ENCODE measurements at regions of chr2 and their contacts with region 1.

Region 1: GRCh38 chr2:190781604-190782198 is 98.9 kb upstream of the GLS start:
- DNase-seq: peak; percentile 48 to 75 (median 59)
- H3K4me3 ChIP-seq: no peak overlapping the region
- H3K27ac ChIP-seq: no peak overlapping the region
- H3K4me1 ChIP-seq: peaks cover 0 to 5% of the 10 kb centered on the region in 2 donors
- H3K27me3 ChIP-seq: no peaks in the 10 kb centered on the region
- CTCF ChIP-seq: peak; percentile 54 to 85 (median 70)
- POLR2A ChIP-seq: no peak

Region 2: DNA sequence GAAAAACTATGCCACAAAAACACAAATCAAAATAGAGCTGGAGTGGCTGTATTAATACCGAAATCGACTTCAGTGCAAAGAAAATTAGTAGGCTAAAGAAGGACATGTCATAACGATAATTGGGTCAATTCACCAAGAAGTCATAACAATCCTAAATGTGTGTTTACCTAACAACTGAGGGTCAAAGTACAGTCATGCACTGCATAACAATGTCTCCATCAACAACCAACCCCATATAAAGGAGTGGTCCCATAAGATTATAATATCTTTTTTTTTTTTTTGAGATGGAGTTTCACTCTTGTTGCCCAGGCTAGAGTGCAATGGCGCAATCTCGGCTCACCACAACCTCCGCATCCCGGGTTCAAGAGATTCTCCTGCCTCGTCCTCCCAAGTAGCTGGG is 45.3 kb before region 1 on chr2:
- intact Hi-C with region 1: no loop called
- DNase-seq: no peak
- H3K4me3 ChIP-seq: no peak overlapping the region
- H3K27ac ChIP-seq: no peak overlapping the region
- H3K4me1 ChIP-seq: no peaks in the 10 kb centered on the region
- H3K27me3 ChIP-seq: no peaks in the 10 kb centered on the region
- CTCF ChIP-seq: no peak
- POLR2A ChIP-seq: no peak

Region 3: GRCh38 chr2:190904640-190905261 is 123.0 kb after region 1 on chr2:
- intact Hi-C with region 1: loop called in 1 of 2 experiments (anchors 10 kb)
- DNase-seq: no peak
- H3K4me3 ChIP-seq: no peak overlapping the region
- H3K27ac ChIP-seq: no peak overlapping the region
- H3K4me1 ChIP-seq: peaks cover 7 to 8% of the 10 kb centered on the region in 2 donors
- H3K27me3 ChIP-seq: no peaks in the 10 kb centered on the region
- CTCF ChIP-seq: no peak
- POLR2A ChIP-seq: no peak

Region 4: DNA sequence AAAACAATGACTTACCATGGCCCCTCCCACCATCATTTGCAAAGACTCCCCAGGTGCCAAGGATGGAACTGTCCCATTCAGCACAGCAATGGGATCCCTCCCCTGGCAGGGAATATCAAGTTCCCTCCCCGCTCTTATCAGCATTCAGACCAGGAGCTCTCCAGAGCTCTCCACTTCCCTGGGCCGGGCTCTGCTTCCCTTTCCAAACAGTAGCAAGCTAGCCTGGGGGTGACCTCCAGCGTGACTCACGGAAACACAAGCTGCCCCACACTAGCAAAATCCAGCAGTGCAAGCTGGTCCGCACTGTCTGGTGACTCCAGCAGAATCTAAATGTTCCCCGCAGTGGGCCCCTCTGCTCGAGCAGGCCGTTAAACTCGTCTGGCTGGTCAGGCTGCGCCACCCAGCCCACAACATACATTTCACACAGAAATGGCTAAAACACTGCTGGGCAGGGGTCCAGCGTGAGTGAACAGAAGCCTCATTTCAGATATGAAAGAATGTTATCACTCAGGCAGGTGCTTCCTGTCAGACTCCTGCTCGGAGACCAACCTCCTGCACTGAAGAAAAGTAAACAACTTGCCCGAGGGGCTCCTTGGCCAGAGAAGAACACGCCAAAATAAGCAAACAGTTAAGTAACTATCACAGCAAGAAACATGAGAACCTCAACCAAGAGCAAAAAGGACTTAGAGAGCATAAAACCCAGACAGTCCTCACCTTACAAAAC is 198.4 kb after region 1 on chr2:
- intact Hi-C with region 1: no loop called
- DNase-seq: peak in 6 of 7 donors; percentile 36 to 70 (median 55)
- H3K4me3 ChIP-seq: no peak overlapping the region
- H3K27ac ChIP-seq: peak overlapping the region in 2 of 5 donors; percentile 26 to 73
- H3K4me1 ChIP-seq: no peaks in the 10 kb centered on the region
- H3K27me3 ChIP-seq: no peaks in the 10 kb centered on the region
- CTCF ChIP-seq: no peak
- POLR2A ChIP-seq: no peak

Region 5: GRCh38 chr2:191020221-191020741 is 238.6 kb after region 1 on chr2:
- intact Hi-C with region 1: loop called in 1 of 2 experiments (anchors 10 kb)
- DNase-seq: peak; percentile 92 to 96 (median 94)
- H3K4me3 ChIP-seq: peak overlapping the region; percentile 26 to 72 (median 59)
- H3K27ac ChIP-seq: peak overlapping the region; percentile 92 to 97 (median 96)
- H3K4me1 ChIP-seq: peaks cover 7 to 14% of the 10 kb centered on the region in 2 donors
- H3K27me3 ChIP-seq: no peaks in the 10 kb centered on the region
- CTCF ChIP-seq: peak in 4 of 6 experiments; percentile 10 to 47 (median 24)
- POLR2A ChIP-seq: peak; percentile 82 to 92

Region 6: DNA sequence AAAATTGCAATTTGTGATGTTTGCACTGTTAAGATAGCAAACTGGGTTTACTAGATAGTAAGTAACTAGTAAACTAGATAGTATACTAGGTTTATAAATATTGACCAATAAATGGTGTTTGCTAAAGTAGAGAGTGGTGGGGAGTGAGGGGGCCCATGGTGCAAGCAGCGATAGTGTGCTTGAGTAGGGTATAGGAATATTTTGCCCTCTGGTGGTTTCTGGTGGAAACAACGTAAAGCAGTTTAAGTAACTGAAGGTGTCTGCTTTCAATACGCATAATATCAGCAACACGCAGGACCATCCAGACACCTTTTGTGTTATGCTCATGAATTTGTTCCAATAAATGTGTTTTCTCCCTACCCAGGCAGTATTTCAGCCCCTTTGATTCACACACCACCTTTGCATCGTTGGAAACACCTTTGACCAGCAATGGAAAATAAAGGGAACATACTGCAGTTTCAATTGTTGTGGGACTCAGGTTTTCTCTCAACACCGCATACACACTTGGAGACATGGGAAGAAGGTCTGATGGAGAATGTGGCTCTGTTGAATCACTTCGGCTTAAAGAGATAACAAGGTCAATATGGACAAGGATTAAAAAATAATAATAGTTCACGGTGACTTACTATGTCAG is 248.9 kb after region 1 on chr2:
- intact Hi-C with region 1: loop called (anchors 10 kb)
- DNase-seq: peak in 3 of 7 donors; percentile 28 to 41 (median 32)
- H3K4me3 ChIP-seq: peak overlapping the region in 1 of 4 donors; percentile 29
- H3K27ac ChIP-seq: no peak overlapping the region
- H3K4me1 ChIP-seq: peaks cover 0 to 5% of the 10 kb centered on the region in 2 donors
- H3K27me3 ChIP-seq: no peaks in the 10 kb centered on the region
- CTCF ChIP-seq: peak; percentile 34 to 67 (median 62)
- POLR2A ChIP-seq: no peak